ENCODE measurements at regions of chr17 and their contacts with region 1.

Region 1: DNA sequence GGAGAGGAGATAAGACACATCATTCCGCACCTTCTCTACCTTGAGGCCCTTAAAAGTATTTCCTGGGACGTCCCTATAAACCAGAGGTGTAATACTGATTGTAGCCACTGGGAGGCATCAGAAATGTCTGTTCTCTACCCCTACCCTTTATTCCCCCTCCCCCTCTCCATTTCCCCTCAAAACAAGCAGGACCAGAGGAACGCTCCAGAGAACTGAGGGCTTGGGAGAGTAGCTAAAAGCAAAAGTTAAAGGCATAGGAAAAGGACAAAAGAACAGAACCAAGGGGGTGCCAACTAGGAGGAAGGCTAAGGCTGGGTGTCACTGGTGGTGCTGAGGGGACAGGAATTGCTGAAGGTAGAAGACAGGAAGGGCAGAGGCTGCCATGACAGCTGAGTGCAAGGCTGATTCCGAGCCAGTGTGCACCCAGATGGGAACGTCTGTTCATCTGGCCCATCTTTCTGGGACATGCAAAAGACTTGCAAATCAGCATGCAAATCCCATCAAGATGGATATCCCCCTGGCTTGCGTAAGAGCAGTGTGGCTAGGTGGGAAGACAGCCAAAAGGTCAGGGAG is 6.7 kb downstream of the CAMTA2 start:
- DNase-seq: no peak
- H3K4me3 ChIP-seq: no peak overlapping the region
- H3K27ac ChIP-seq: no peak overlapping the region
- H3K4me1 ChIP-seq: peaks cover 1% of the 10 kb centered on the region
- H3K27me3 ChIP-seq: no peaks in the 10 kb centered on the region
- CTCF ChIP-seq: peak; percentile 98

Region 2: DNA sequence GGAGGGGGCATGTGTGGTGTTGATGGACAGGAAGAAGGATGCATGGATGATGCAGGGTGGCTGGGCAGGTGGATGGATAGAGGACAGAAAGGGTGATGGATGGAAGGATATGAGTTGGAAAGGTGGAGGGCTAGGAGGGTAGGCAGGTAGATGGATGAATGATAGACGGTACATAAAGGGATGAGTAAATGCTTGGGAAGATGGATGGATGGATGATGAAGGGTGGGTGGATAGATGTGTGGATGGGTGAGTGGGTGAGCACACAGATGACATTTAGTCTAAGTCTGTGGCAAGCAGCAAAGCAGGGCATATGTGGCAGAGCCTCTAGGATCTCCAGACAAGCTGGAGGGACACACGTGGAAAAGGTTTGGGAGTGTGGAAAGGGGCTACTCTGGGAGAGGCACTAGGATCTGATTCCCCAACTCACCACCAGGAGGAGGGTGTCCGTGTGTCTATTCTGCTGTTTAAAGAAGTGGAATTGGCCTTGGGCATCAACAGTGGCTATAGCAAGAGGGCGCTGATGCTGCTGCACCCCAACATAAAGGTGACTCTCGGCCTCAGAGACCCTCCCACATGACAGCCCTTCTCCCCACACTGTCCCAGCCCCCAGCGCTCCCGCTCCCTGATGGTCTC is 165.6 kb before region 1 on chr17:
- CTCF ChIA-PET with region 1: no interaction called
- POLR2A ChIA-PET with region 1: no interaction called
- intact Hi-C with region 1: no loop called
- DNase-seq: no peak
- H3K4me3 ChIP-seq: no peak overlapping the region
- H3K27ac ChIP-seq: no peak overlapping the region
- H3K4me1 ChIP-seq: peaks cover 19% of the 10 kb centered on the region
- H3K27me3 ChIP-seq: no peaks in the 10 kb centered on the region
- CTCF ChIP-seq: peak; percentile 52; the same call in 1 of the 2 replicates

Region 3: GRCh38 chr17:4939796-4940624 is 40.7 kb before region 1 on chr17 and contains the starts of genes RNF167 and SLC25A11:
- CTCF ChIA-PET with region 1: no interaction called
- POLR2A ChIA-PET with region 1: no interaction called
- intact Hi-C with region 1: no loop called
- DNase-seq: peak; percentile 98
- H3K4me3 ChIP-seq: peak within 1 kb of the TSS; percentile 93
- H3K27ac ChIP-seq: peak within 1 kb of the TSS; percentile 87
- H3K4me1 ChIP-seq: peaks cover 25% of the 10 kb centered on the region
- H3K27me3 ChIP-seq: no peaks in the 10 kb centered on the region
- CTCF ChIP-seq: no peak
- total RNA-seq, gene RNF167: 122 and 135 TPM in 2 replicates
- total RNA-seq, gene SLC25A11: 50.7 and 56.2 TPM in 2 replicates

Region 4: GRCh38 chr17:5065227-5065744 is 84.6 kb after region 1 on chr17:
- CTCF ChIA-PET with region 1: no interaction called
- POLR2A ChIA-PET with region 1: no interaction called
- intact Hi-C with region 1: loop called (anchors 1 kb)
- DNase-seq: no peak
- H3K4me3 ChIP-seq: no peak overlapping the region
- H3K27ac ChIP-seq: no peak overlapping the region
- H3K4me1 ChIP-seq: no peaks in the 10 kb centered on the region
- H3K27me3 ChIP-seq: peaks cover 5% of the 10 kb centered on the region; the same call in 1 of the 2 replicates
- CTCF ChIP-seq: no peak

Measured in PC-9 (cell line).